ENCODE measurements at regions of chr1 and their contacts with region 1.

Region 1: GRCh38 chr1:161382214-161383019 is 14.7 kb upstream of the CFAP126 start:
- DNase-seq: no peak
- H3K4me3 ChIP-seq: no peak overlapping the region
- H3K27ac ChIP-seq: no peak overlapping the region
- H3K4me1 ChIP-seq: no peaks in the 10 kb centered on the region
- H3K27me3 ChIP-seq: no peaks in the 10 kb centered on the region
- CTCF ChIP-seq: peak in 2 of 3 experiments; percentile 39 to 52; a peak in 2 of 4 replicates
- EP300 ChIP-seq: no peak
- POLR2A ChIP-seq: no peak
- RAD21 ChIP-seq: peak; percentile 70 to 73

Region 2: DNA sequence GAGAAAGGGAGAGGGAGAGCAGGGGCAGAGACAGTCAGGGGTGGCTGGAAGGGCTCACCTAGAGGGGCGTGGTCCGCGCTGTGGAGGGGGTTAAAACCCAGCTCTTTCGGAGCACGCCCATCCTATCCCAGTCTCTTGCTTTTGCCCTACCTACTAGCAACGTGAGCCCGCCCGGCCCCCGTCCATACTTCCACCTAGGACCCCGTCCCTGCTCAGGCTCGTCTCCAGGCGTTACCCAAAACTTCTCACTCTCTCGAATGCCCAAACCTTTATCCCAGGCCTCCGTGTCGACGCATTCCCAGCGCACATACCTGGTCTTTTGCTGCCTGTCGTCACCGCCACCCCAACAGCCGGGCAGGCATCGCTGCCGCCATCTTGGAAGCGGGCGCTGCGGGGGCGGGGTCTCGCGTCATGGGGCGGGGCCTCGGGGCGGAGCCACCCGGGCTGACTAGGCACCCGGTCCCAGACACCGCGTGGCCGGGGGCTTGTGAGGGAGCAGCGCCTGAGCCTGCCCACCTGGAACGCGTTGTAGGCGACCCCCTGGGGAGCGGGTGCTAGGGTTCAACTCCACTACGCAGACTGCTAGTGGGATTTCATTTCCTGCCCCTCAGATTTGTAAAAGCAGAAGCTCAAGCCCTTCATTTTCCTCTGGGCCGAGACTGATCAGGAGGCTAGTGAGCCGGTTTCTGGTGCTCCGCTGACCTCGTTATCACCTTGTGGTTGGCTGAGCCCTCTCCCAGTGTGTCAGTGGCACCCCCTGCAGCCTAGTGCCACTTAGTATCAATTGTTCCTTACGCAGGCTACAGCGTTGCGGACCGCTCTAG is 205.1 kb before region 1 on chr1 and contains the start of gene B4GALT3:
- CTCF ChIA-PET with region 1: interaction called, 26 read pairs
- POLR2A ChIA-PET with region 1: no interaction called
- DNase-seq: peak in 1 of 2 experiments; percentile 100
- H3K4me3 ChIP-seq: peak within 1 kb of the TSS; percentile 66 to 96 (median 84)
- H3K27ac ChIP-seq: peak within 1 kb of the TSS; percentile 88
- H3K4me1 ChIP-seq: peaks cover 0 to 13% (median under 1%) of the 10 kb centered on the region in 4 experiments; a peak in 3 of 7 replicates
- H3K27me3 ChIP-seq: no peaks in the 10 kb centered on the region
- CTCF ChIP-seq: peak; percentile 32 to 40 (median 38); a peak in 3 of 4 replicates
- EP300 ChIP-seq: no peak
- POLR2A ChIP-seq: peak; percentile 89 to 97
- RAD21 ChIP-seq: peak in 1 of 2 experiments; percentile 23; a peak in 2 of 4 replicates
- total RNA-seq, gene B4GALT3: 42.3 and 45.5 TPM in 2 replicates

Region 3: DNA sequence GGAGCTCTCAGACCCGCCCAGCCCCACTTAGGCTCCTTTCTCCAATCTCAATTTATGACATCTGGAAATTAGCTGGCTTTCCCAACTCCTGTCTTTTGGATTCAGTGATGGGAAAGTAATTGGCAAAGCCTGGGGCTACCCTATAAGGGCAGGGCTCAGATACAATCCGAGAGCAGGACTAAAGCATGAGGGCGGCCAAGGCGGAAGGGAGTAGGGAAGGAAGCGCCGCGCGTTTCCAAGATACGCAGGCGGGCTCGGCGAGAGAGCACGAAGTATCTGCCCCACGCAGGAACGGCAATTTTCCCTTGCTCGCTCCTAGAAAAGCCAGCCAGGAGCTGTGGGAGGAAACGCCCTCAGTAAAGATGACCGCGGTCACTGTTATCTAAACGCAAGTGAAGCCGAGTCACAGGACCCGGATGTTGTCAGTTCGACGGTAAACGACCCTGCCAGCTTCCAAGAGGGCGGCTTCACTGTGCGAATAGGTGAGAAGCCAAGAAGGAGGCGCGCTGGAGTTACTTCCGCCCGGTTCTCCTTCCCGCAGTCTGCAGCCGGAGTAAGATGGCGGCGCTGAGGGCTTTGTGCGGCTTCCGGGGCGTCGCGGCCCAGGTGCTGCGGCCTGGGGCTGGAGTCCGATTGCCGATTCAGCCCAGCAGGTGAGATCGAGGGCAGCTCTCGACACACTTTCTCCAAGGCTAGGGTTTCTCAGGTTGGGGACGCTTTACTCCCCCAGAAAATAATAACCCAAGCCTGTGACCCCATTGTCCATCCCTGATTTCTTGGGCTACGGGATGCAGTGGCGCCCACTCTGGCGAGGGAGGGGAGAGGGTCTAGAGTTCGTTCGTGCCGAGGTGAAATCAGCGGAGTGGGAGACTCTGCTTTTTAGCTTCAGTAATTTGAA is 180.3 kb before region 1 on chr1 and contains the start of gene NDUFS2:
- CTCF ChIA-PET with region 1: interaction called, 13 read pairs
- POLR2A ChIA-PET with region 1: interaction called, 6 read pairs
- DNase-seq: peak; percentile 89 to 95
- H3K4me3 ChIP-seq: peak within 1 kb of the TSS; percentile 63 to 97 (median 93)
- H3K27ac ChIP-seq: peak within 1 kb of the TSS; percentile 94
- H3K4me1 ChIP-seq: peaks cover 20 to 48% (median 42%) of the 10 kb centered on the region in 4 experiments
- H3K27me3 ChIP-seq: no peaks in the 10 kb centered on the region
- CTCF ChIP-seq: peak; percentile 31 to 62 (median 49)
- EP300 ChIP-seq: no peak
- POLR2A ChIP-seq: peak; percentile 97 to 99
- RAD21 ChIP-seq: peak in 1 of 2 experiments; percentile 23; a peak in 1 of 4 replicates
- total RNA-seq, gene NDUFS2: 88.7 and 95.1 TPM in 2 replicates

Region 4: GRCh38 chr1:161216945-161217712 is 165.3 kb before region 1 on chr1:
- CTCF ChIA-PET with region 1: interaction called, 62 read pairs
- POLR2A ChIA-PET with region 1: interaction called, 3 read pairs
- DNase-seq: no peak
- H3K4me3 ChIP-seq: no peak overlapping the region
- H3K27ac ChIP-seq: no peak overlapping the region
- H3K4me1 ChIP-seq: peaks cover 0 to 13% (median 0%) of the 10 kb centered on the region in 4 experiments; a peak in 3 of 7 replicates
- H3K27me3 ChIP-seq: 0 out of 7 replicates have a peak, but pooled peaks cover 0 to under 1% (median 0%) of the 10 kb centered on the region in 4 experiments
- CTCF ChIP-seq: no peak
- EP300 ChIP-seq: no peak
- POLR2A ChIP-seq: no peak
- RAD21 ChIP-seq: no peak

Region 5: DNA sequence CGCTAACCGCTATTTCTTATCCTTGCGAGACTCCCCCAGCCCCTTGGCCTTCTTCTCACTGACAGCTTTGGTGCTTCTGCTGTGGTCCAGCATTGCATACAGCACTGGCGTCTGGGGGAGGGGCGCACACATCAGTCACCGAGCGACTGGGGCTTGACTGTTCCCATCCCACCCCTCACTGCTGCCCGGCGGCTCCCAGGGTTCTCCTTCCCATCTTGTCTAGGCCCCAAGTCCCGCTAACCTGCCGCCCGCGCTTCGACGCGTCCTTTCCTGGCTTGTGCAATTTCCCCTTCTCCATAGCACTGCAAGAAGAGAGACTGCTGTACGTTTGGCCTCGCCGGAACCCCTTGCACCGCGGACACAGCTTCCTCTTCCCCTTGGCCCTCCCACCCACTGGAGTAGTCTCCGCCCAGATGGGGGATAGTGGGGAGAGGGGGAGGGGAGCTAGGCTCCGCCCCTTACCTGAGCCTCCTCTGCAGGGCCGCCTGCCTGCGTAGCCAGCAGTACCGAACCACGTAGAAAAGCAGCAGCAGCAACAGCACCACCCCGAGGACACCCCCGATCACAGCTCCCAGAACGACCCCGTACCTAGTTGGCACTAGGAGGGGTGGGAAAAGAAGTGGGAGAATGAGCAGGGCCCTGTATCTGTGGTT is 76.4 kb before region 1 on chr1:
- CTCF ChIA-PET with region 1: interaction called, 16 read pairs
- POLR2A ChIA-PET with region 1: no interaction called
- DNase-seq: peak; percentile 96 to 97
- H3K4me3 ChIP-seq: peak overlapping the region; percentile 70 to 87 (median 79)
- H3K27ac ChIP-seq: no peak overlapping the region
- H3K4me1 ChIP-seq: peaks cover 0 to 16% (median 9%) of the 10 kb centered on the region in 4 experiments; a peak in 6 of 7 replicates
- H3K27me3 ChIP-seq: no peaks in the 10 kb centered on the region
- CTCF ChIP-seq: peak; percentile 84 to 90 (median 89)
- EP300 ChIP-seq: peak in 1 of 2 experiments; percentile 35; a peak in 1 of 3 replicates
- POLR2A ChIP-seq: peak in 1 of 2 experiments; percentile 55; a peak in 1 of 3 replicates
- RAD21 ChIP-seq: peak; percentile 82 to 85

Region 6: DNA sequence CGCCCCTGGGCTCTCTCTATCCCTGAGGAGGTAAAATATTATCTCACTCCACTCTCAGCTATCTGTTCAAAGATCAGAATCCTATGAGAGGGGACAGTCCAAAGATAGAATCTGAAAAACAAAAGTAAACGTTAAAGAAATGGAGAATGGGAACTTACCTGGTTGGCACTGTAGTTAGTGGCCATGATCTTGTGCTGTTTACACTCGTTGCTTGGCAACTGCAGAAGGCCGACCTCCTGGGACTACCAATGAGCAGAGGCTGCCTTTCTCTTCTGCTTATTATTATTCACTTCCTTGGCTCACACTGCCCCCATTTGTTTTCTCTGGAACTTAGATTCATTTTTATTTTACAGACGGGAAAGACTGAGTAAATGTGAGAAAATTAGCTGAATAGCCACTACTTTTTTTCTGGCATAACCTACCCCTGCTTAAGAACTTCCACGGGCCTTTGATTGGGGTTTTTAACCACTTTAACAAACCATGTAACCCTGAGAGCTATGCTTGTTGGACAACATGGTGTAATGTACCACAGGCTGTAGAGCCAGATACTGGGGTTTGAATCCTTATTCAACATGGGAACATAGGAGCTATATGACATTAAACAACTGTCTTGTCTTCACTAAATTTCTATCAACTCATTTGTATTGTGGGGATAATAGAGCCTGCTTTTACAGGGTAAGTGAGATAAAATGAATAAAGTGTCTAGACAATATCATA is 14.6 kb before region 1 on chr1 and contains the start of gene CFAP126:
- CTCF ChIA-PET with region 1: interaction called, 41 read pairs
- POLR2A ChIA-PET with region 1: interaction called, 3 read pairs
- DNase-seq: no peak
- H3K4me3 ChIP-seq: no peak within 1 kb of the TSS
- H3K27ac ChIP-seq: peak within 1 kb of the TSS; percentile 68
- H3K4me1 ChIP-seq: peaks cover 0 to 4% (median 0%) of the 10 kb centered on the region in 4 experiments; a peak in 1 of 7 replicates
- H3K27me3 ChIP-seq: no peaks in the 10 kb centered on the region
- CTCF ChIP-seq: peak in 2 of 3 experiments; percentile 16 to 20; a peak in 2 of 4 replicates
- EP300 ChIP-seq: no peak
- POLR2A ChIP-seq: peak in 1 of 2 experiments; percentile 45; a peak in 1 of 3 replicates
- RAD21 ChIP-seq: peak; percentile 9 to 36; a peak in 3 of 4 replicates
- total RNA-seq, gene CFAP126: not detected in 2 replicates

Region 7: DNA sequence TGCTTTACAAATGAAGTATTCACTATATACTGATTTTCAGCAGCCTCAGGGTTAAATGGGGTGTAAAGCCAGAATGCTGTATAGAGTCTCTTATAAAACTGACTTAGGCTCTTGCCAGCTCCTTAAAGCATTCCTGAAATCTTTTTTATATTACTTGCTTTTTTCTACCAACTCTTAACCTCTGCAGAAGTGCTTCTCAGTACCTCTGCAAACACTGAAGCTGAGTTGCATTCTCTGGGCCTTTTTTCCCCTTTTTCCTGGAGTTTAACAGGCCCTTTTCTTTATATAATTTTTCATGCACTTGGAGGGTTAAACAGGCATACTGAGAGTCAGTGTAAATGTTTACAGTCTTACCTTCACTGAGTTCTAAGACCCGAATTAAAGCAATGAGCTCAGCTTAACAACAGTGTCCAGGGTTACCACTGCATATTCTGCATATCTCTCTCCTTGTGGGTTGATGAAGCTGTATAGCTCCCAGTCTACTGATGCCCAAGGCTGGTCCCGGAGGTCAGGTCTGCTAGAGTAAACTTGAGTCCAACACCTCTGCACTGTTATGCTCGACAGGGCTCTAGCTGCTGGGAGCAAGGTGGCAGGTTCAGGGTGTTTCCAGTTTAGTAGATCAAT is 26.1 kb after region 1 on chr1:
- CTCF ChIA-PET with region 1: no interaction called
- POLR2A ChIA-PET with region 1: no interaction called
- DNase-seq: no peak
- H3K4me3 ChIP-seq: no peak overlapping the region
- H3K27ac ChIP-seq: no peak overlapping the region
- H3K4me1 ChIP-seq: peaks cover 0 to 7% (median 0%) of the 10 kb centered on the region in 4 experiments; a peak in 1 of 7 replicates
- H3K27me3 ChIP-seq: no peaks in the 10 kb centered on the region
- CTCF ChIP-seq: no peak
- EP300 ChIP-seq: no peak
- POLR2A ChIP-seq: no peak
- RAD21 ChIP-seq: no peak